Endothelial cell of umbilical vein (primary cell): ENCODE measurements at regions of chr3 and their contacts with region 1.

Region 1: GRCh38 chr3:101195951-101196713 is 124.2 kb downstream of the IMPG2 start:
- DNase-seq: peak; percentile 89
- H3K4me3 ChIP-seq: no peak overlapping the region
- H3K27ac ChIP-seq: peak overlapping the region; percentile 81
- H3K4me1 ChIP-seq: peaks cover 23% of the 10 kb centered on the region
- H3K27me3 ChIP-seq: no peaks in the 10 kb centered on the region
- CTCF ChIP-seq: peak; percentile 30 to 42
- POLR2A ChIP-seq: no peak

Region 2: GRCh38 chr3:100737334-100737733 is 458.8 kb before region 1 on chr3:
- CTCF ChIA-PET with region 1: interaction called, 47 read pairs
- POLR2A ChIA-PET with region 1: no interaction called
- dilution Hi-C with region 1: no loop called
- intact Hi-C with region 1: loop called (anchors 1 kb)
- DNase-seq: peak; percentile 48
- H3K4me3 ChIP-seq: no peak overlapping the region
- H3K27ac ChIP-seq: no peak overlapping the region
- H3K4me1 ChIP-seq: no peaks in the 10 kb centered on the region
- H3K27me3 ChIP-seq: no peaks in the 10 kb centered on the region
- CTCF ChIP-seq: peak; percentile 19 to 36
- POLR2A ChIP-seq: no peak

Region 3: DNA sequence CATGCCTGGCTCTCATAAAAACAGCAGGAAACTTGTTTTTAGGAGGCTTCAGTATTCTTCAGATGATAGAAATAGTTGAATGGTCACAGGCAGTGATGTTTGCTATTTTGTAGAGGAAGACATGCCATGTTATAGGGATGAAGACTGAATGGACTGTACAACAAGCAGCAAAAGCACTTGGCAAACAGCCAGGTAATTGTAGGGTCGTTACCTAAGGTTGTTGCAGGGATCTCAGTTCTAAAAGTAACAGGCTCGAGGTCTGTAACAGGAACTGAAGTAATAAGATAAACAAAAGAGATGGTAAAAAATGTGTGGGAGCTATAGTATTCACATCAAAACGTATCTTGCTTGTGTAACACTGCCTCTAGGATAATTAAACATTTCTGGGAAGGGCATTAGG is 370.6 kb before region 1 on chr3:
- CTCF ChIA-PET with region 1: interaction called, 26 read pairs
- POLR2A ChIA-PET with region 1: no interaction called
- dilution Hi-C with region 1: no loop called
- intact Hi-C with region 1: loop called (anchors 1 kb)
- DNase-seq: peak; percentile 70
- H3K4me3 ChIP-seq: no peak overlapping the region
- H3K27ac ChIP-seq: no peak overlapping the region
- H3K4me1 ChIP-seq: peaks cover 5% of the 10 kb centered on the region
- H3K27me3 ChIP-seq: no peaks in the 10 kb centered on the region
- CTCF ChIP-seq: no peak
- POLR2A ChIP-seq: no peak

Region 4: GRCh38 chr3:100899440-100900091 is 296.6 kb before region 1 on chr3:
- CTCF ChIA-PET with region 1: interaction called, 257 read pairs
- POLR2A ChIA-PET with region 1: no interaction called
- dilution Hi-C with region 1: no loop called
- intact Hi-C with region 1: no loop called
- DNase-seq: peak; percentile 92
- H3K4me3 ChIP-seq: peak overlapping the region in 1 of 3 experiments; percentile 38
- H3K27ac ChIP-seq: peak overlapping the region; percentile 84
- H3K4me1 ChIP-seq: peaks cover 61% of the 10 kb centered on the region
- H3K27me3 ChIP-seq: no peaks in the 10 kb centered on the region
- CTCF ChIP-seq: no peak
- POLR2A ChIP-seq: peak; percentile 19

Region 5: GRCh38 chr3:101027286-101027685 is 168.8 kb before region 1 on chr3:
- CTCF ChIA-PET with region 1: interaction called, 10 read pairs
- POLR2A ChIA-PET with region 1: no interaction called
- dilution Hi-C with region 1: no loop called
- intact Hi-C with region 1: no loop called
- DNase-seq: no peak
- H3K4me3 ChIP-seq: no peak overlapping the region
- H3K27ac ChIP-seq: no peak overlapping the region
- H3K4me1 ChIP-seq: no peaks in the 10 kb centered on the region
- H3K27me3 ChIP-seq: no peaks in the 10 kb centered on the region
- CTCF ChIP-seq: no peak
- POLR2A ChIP-seq: no peak

Region 6: GRCh38 chr3:101185341-101185740 is 10.8 kb before region 1 on chr3:
- CTCF ChIA-PET with region 1: interaction called, 14 read pairs
- POLR2A ChIA-PET with region 1: no interaction called
- dilution Hi-C with region 1: no loop called
- intact Hi-C with region 1: no loop called
- DNase-seq: no peak
- H3K4me3 ChIP-seq: no peak overlapping the region
- H3K27ac ChIP-seq: no peak overlapping the region
- H3K4me1 ChIP-seq: no peaks in the 10 kb centered on the region
- H3K27me3 ChIP-seq: no peaks in the 10 kb centered on the region
- CTCF ChIP-seq: no peak
- POLR2A ChIP-seq: no peak